Dorsolateral prefrontal cortex (tissue), 120 donors: ENCODE measurements at regions of chr3 and their contacts with region 1.

Region 1: DNA sequence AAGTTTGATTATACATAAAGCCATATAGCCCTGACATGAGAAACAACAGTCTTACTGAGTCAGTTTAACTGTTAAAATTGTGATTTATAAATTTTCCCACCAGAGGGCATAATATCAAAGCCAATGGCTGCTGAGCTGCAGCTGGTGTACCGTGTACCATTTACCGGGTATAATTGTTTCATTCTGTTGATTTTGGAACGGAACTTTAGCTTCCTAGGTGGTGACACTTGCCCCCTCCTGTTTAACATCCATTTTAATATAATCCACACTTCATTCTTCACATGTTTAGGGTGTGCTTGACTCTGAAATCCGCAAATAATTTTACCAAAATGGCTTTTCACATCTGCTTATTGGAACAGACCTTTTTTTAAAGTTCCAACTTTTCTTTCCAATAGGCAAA is 72.8 kb downstream of the SLC9A9 start:
- DNase-seq: no peak
- H3K4me3 ChIP-seq: peak overlapping the region in 54 of 59 donors; percentile 2 to 61 (median 40)
- H3K27ac ChIP-seq: peak overlapping the region in 5 of 59 donors; percentile 4 to 36 (median 23)
- H3K27me3 ChIP-seq: no peaks in the 10 kb centered on the region
- CTCF ChIP-seq: peak; percentile 50 to 91 (median 74)

Region 2: DNA sequence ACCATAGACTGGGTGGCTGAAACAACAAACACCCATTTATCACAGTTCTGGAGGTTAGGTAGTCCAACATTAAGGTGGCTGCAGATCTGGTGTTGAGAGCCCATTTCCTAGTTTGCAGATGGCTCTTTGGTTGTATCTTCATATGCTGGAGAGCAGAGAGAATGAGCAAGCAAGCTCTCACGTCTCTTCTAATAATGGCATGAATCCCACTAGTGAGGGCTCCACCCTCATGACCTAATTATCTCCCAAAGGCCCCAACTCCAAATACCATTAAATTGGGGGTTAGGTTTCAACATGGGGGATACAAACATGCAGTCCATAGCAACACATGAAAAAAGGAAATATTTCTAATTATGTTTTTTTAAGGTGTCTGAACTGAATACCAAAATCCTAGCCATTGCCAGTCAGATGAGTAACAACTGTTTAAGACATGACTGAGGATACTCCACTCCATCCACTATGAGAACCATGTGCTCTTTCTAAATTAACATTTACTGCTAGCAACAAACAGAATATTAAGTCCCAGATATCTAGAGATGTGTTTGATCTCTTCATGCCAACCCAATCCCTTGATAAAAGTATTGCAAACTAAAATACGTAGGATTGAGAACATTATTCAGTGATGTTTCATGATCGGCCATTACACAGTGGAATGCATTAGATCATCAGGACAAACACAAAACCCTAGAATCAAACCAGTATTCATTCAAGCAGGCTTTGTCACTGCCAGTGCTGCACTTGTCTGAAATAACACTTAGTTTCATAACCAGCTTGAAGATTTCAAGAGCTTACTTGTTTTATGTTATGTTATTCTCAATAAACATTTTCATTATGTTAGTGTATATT is 267.5 kb before region 1 on chr3:
- intact Hi-C with region 1: no loop called
- DNase-seq: no peak
- H3K4me3 ChIP-seq: peak overlapping the region in 1 of 59 donors; percentile 7
- H3K27ac ChIP-seq: no peak overlapping the region
- H3K27me3 ChIP-seq: no peaks in the 10 kb centered on the region
- CTCF ChIP-seq: no peak

Region 3: DNA sequence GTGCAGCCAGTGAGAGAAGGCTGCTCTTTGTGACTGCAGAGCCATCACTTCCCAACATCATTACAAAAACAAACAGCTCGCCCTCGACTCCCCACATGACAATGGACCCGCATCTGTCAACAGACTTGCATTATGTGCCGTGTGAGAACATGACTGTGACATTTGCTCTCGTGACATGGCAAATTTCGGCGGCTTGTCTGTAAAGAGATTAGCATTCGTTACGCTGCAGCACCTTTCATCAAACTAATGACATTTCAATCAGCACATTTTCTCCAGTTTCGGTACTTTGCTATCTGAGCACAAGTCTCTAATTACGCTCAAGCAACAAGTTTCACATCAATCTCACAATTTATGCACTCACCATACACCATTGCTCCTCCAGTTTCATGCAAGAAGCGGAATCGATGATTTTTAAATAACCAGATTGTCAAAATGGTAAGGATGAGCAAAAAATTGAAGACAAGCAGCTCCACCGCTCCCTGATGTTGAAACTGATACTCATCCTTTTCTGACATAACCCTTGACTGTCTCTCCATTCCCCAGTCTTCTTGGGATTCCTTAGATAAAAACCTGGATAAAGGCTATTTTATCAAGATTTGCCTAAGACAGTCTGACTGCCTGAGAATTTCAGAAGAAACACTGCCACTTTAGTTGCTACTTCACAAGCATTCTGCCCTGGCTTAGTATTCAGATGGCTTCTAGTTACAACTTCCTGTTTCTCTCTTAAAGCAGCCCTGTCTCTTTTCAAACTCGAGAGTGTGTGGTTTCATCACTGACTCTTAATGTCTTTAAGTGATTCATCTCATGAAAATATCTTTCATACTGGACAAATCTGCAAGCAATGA is 72.5 kb after region 1 on chr3 and contains the start of gene SLC9A9:
- intact Hi-C with region 1: loop called (anchors 5 to 10 kb)
- DNase-seq: peak; percentile 6 to 84 (median 60)
- H3K4me3 ChIP-seq: peak within 1 kb of the TSS; percentile 56 to 90 (median 74)
- H3K27ac ChIP-seq: peak within 1 kb of the TSS in 58 of 59 donors; percentile 4 to 92 (median 80)
- H3K27me3 ChIP-seq: no peaks in the 10 kb centered on the region
- CTCF ChIP-seq: peak in 3 of 56 donors; percentile 5 to 10 (median 6)
- total RNA-seq, gene SLC9A9: 12.3 to 54.8 (median 25.0) TPM

Region 4: GRCh38 chr3:143895805-143896204 is 120.3 kb after region 1 on chr3:
- intact Hi-C with region 1: loop called in 1 of 2 experiments (anchors 10 kb)
- DNase-seq: no peak
- H3K4me3 ChIP-seq: no peak overlapping the region
- H3K27ac ChIP-seq: no peak overlapping the region
- H3K27me3 ChIP-seq: no peaks in the 10 kb centered on the region
- CTCF ChIP-seq: peak in 55 of 56 donors; percentile 12 to 74 (median 52)

Region 5: GRCh38 chr3:143951351-143951971 is 176.0 kb after region 1 on chr3:
- intact Hi-C with region 1: loop called (anchors 10 kb)
- DNase-seq: peak in 2 of 10 donors; percentile 4 to 22
- H3K4me3 ChIP-seq: no peak overlapping the region
- H3K27ac ChIP-seq: no peak overlapping the region
- H3K27me3 ChIP-seq: no peaks in the 10 kb centered on the region
- CTCF ChIP-seq: peak; percentile 49 to 86 (median 73)